Endothelial cell of umbilical vein (primary cell): ENCODE measurements at regions of chrX and their contacts with region 1.

Region 1: DNA sequence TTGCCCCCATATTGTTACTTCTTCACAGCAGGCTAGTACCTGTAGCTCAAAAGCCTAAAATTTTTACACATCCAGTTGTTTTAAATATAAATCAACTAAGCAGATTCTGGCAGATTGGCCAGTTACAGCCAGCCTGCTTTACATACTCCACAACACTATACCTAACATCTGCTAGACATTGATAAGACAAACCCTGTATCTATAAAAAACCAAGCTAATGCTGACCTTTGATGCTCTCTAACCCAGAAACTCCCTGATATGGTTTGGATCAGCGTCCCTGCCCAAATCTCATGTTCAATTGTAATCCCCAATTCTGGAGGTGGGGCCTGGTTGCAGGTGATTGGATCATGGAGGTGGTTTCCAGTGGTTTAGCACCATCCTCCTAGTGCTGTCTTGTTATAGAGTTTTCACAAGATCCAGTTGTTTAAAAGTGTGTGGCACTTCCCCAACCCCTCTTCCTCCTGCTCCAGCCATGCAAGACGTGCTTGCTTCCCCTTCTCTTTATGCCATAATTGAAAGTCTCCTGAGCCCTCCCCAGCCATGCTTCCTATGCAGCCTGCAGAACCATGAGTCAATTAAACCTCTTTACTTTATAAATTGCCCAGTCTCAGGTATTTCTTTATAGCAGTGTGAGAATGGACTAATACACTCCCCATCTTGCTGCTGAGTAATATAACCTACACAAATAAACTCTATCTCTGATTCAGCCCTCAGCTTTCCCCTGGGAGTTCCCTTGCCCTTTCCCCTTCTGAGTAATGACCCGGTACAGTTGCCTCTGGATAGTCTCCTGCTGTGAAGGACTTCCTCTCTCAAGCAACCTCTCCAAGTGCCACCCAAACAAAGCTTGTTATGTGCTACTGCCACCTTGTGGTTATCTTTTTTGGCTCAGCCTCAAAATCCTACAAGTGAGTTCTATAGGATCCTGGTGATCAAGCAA is 39.6 kb downstream of the ZCCHC13 start:
- DNase-seq: peak; percentile 90
- H3K4me3 ChIP-seq: no peak overlapping the region
- H3K27ac ChIP-seq: no peak overlapping the region
- H3K4me1 ChIP-seq: no peaks in the 10 kb centered on the region
- H3K27me3 ChIP-seq: no peaks in the 10 kb centered on the region
- CTCF ChIP-seq: peak; percentile 24 to 35
- POLR2A ChIP-seq: no peak

Region 2: DNA sequence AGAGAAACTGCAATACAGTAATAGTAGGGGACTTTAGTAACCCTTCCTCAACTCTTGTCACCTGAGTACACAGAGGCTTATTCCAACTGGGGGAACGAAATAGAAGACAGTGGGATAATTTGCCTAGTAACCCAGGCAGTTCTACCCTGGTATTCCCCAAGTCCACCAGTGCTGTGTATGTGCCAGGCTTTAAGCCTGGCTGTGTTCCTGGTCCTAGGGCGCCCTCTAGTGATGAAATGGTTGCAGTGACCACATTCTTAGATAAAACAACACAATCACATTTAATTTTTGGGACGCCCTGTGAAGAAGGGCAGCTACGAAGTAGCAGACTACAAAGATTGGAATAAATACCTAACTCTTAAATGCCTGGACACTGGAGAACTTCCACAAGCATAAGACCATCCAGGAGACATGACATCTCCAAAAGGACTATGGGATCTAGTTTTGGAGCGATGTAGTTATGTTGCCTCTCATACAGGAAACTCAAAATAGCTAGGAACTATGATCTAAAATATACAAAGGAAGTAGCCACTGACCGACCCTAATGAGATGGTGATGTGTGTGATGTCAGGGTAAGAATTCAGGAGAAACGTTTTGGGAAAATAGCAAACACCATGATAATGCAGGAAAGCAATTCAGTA is 328.1 kb before region 1 on chrX:
- CTCF ChIA-PET with region 1: interaction called, 7 read pairs
- POLR2A ChIA-PET with region 1: no interaction called
- dilution Hi-C with region 1: no loop called
- intact Hi-C with region 1: loop called (anchors 1 kb)
- DNase-seq: peak; percentile 70
- H3K4me3 ChIP-seq: no peak overlapping the region
- H3K27ac ChIP-seq: no peak overlapping the region
- H3K4me1 ChIP-seq: no peaks in the 10 kb centered on the region
- H3K27me3 ChIP-seq: no peaks in the 10 kb centered on the region
- CTCF ChIP-seq: peak; percentile 54
- POLR2A ChIP-seq: no peak

Region 3: DNA sequence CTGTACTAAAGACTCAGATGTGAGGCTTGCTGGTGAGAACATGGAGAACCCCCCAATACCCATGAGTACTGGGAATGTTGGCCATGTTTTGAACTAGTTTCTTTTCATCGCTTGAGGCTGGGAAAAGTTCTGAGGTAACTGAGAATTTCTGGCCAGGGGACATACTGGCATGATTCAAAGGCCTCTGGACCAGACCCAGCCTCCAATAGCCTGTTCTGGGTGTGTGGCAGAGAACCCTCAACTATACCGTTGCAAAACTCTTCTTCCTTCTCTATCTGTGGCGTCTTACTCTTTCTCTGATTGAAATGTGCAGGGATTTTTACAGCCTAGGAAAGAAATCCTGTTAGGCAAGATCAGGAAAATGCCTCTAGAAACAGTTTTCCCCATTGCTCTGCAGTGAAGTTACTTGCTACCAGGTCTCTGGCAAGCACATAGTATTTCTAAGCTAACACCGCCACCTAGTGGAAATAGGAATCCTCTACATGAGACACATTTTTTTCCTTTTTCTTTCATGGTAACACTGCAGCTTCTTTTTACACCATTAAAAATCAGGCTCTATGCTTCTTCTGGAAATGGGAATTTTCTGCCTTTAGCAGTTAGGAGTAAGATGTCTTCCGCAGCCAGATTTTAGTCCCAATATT is 210.3 kb before region 1 on chrX:
- CTCF ChIA-PET with region 1: interaction called, 3 read pairs
- POLR2A ChIA-PET with region 1: no interaction called
- dilution Hi-C with region 1: no loop called
- intact Hi-C with region 1: loop called (anchors 2 kb)
- DNase-seq: peak; percentile 39
- H3K4me3 ChIP-seq: no peak overlapping the region
- H3K27ac ChIP-seq: no peak overlapping the region
- H3K4me1 ChIP-seq: no peaks in the 10 kb centered on the region
- H3K27me3 ChIP-seq: no peaks in the 10 kb centered on the region
- CTCF ChIP-seq: peak; percentile 23 to 34
- POLR2A ChIP-seq: no peak

Region 4: GRCh38 chrX:74232859-74233258 is 110.8 kb before region 1 on chrX:
- CTCF ChIA-PET with region 1: interaction called, 3 read pairs
- POLR2A ChIA-PET with region 1: no interaction called
- dilution Hi-C with region 1: no loop called
- intact Hi-C with region 1: loop called (anchors 5 kb)
- DNase-seq: peak; percentile 33
- H3K4me3 ChIP-seq: no peak overlapping the region
- H3K27ac ChIP-seq: no peak overlapping the region
- H3K4me1 ChIP-seq: no peaks in the 10 kb centered on the region
- H3K27me3 ChIP-seq: no peaks in the 10 kb centered on the region
- CTCF ChIP-seq: peak in 1 of 2 donors; percentile 1
- POLR2A ChIP-seq: no peak

Region 5: DNA sequence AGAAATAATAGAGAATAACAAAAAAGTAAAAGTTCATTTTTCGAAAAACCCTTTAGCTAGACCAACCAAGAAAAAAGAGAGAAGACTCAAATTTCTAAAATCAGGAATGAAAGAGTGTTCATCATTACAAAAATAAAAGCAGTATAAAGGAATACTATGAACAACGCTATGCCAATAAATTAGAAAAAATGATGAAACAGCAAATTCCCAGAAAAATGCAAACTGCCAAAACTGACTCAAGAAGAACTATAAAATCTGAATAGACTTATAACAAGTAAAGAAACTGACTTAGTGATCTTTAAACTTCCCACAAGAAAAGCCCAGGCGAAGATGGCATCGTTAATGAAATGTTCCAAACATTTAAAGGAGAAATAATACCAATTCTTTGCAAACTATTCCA is 42.7 kb before region 1 on chrX:
- CTCF ChIA-PET with region 1: no interaction called
- POLR2A ChIA-PET with region 1: no interaction called
- dilution Hi-C with region 1: no loop called
- intact Hi-C with region 1: no loop called
- DNase-seq: no peak
- H3K4me3 ChIP-seq: no peak overlapping the region
- H3K27ac ChIP-seq: no peak overlapping the region
- H3K4me1 ChIP-seq: no peaks in the 10 kb centered on the region
- H3K27me3 ChIP-seq: no peaks in the 10 kb centered on the region
- CTCF ChIP-seq: no peak
- POLR2A ChIP-seq: no peak

Region 6: DNA sequence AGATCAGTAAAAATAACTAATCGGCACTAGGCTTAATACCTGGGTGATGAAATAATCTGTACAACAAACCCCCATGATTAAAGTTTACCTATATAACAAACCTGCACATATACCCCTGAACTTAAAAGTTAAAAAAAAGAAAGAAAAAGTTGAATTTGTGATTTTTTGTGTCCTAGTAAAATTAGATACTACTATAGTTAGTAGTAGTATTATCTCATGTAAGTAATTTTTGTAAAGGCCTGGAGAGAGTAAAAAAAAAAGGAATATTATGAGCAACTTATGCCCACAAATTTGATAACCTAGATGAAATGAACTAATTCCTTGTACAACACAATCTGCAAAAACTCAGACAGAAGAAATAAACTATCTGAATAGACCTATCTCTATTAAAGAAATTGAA is 51.9 kb after region 1 on chrX:
- CTCF ChIA-PET with region 1: no interaction called
- POLR2A ChIA-PET with region 1: no interaction called
- dilution Hi-C with region 1: no loop called
- intact Hi-C with region 1: no loop called
- DNase-seq: no peak
- H3K4me3 ChIP-seq: no peak overlapping the region
- H3K27ac ChIP-seq: no peak overlapping the region
- H3K4me1 ChIP-seq: no peaks in the 10 kb centered on the region
- H3K27me3 ChIP-seq: no peaks in the 10 kb centered on the region
- CTCF ChIP-seq: no peak
- POLR2A ChIP-seq: no peak